Heart left ventricle (tissue), 16 donors: ENCODE measurements at regions of chr11 and their contacts with region 1.

Region 1: GRCh38 chr11:57426929-57427726 is at the start of gene SLC43A3:
- DNase-seq: peak; percentile 78 to 85 (median 81)
- ATAC-seq: peak; percentile 63 to 72 (median 68)
- H3K4me3 ChIP-seq: peak within 1 kb of the TSS; percentile 30 to 79 (median 59)
- H3K27ac ChIP-seq: peak within 1 kb of the TSS; percentile 88 to 98 (median 92)
- H3K4me1 ChIP-seq: peaks cover 6 to 82% (median 54%) of the 10 kb centered on the region in 12 donors
- H3K27me3 ChIP-seq: no peaks in the 10 kb centered on the region
- CTCF ChIP-seq: peak in 2 of 12 donors; percentile 4 to 21
- POLR2A ChIP-seq: peak in 1 of 2 donors; percentile 28
- total RNA-seq, gene SLC43A3: 13.5 to 56.9 (median 24.7) TPM

Region 2: DNA sequence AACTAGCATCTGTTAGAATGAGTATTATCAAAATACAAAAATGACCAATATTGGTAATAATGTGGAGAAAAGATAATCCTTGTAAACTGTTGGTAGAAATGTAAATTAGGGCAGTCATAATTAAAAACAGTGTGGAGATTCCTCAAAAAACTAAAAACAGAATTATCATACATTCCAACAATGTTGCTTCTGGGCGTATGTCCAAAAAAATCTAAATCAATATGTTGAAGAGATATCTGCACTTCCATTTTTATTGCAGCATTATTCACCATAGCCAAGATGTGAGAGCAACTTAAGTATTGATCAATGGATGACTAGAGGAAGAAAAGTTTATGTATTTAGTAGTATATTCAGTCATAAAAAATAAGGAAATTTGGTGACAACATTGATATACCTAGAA is 618.8 kb before region 1 on chr11:
- intact Hi-C with region 1: no loop called
- DNase-seq: no peak
- ATAC-seq: no peak
- H3K4me3 ChIP-seq: no peak overlapping the region
- H3K27ac ChIP-seq: no peak overlapping the region
- H3K4me1 ChIP-seq: no peaks in the 10 kb centered on the region
- H3K27me3 ChIP-seq: no peaks in the 10 kb centered on the region
- CTCF ChIP-seq: no peak
- POLR2A ChIP-seq: no peak

Region 3: GRCh38 chr11:57406337-57406904 is 20.7 kb before region 1 on chr11:
- intact Hi-C with region 1: loop called in 1 of 10 experiments (anchors 2 kb)
- DNase-seq: peak; percentile 34 to 71 (median 38)
- ATAC-seq: peak; percentile 55 to 93 (median 78)
- H3K4me3 ChIP-seq: no peak overlapping the region
- H3K27ac ChIP-seq: peak overlapping the region in 11 of 12 donors; percentile 33 to 75 (median 69)
- H3K4me1 ChIP-seq: peaks cover 4 to 32% (median 22%) of the 10 kb centered on the region in 12 donors
- H3K27me3 ChIP-seq: no peaks in the 10 kb centered on the region
- CTCF ChIP-seq: no peak
- POLR2A ChIP-seq: no peak